ENCODE measurements at regions of chr10 and their contacts with region 1.

Region 1: GRCh38 chr10:27661514-27662286 is 83.9 kb downstream of the MKX start:
- DNase-seq: no peak
- ATAC-seq: no peak

Region 2: DNA sequence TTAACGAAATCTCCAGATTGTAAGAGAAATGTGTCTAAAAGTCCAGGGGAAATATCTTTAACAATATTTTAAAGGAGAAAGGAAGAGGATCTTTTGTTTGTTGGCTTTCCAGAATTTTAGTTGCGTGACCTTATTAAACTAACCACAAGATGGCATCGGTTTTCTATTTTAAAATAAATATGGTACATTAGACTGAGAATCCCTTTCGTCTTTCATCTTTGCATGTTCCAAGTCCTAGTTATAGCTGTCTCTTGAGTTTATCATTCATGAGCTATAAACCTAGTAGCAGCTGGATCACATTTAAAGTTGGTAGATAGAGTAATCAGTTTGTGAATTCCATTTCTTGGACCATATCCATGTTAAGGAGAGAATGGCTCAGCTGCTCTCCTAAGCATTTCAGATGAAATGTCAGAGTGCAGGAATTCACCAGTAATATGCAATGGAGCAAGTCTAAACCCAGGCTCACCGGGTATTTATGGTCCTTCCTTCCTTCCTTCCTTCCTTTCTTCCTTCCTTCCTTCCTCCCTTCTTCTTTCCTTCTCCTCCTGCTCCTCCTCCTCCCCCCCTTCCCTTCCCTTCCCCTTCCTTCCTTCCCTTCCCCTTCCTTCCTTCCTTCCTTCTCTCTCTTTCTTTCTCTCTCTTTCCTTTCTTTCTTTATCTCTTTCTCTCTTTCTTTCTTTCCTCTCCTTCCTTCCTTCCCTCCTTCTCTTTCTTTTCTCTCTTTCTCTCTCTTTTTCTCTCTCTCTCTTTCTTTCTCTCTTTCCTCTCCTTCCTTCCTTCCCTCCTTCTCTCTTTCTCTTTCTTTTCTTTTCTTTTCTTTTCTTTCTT is 215.4 kb before region 1 on chr10:
- intact Hi-C with region 1: loop called (anchors 2 kb)
- DNase-seq: no peak
- ATAC-seq: no peak

Region 3: DNA sequence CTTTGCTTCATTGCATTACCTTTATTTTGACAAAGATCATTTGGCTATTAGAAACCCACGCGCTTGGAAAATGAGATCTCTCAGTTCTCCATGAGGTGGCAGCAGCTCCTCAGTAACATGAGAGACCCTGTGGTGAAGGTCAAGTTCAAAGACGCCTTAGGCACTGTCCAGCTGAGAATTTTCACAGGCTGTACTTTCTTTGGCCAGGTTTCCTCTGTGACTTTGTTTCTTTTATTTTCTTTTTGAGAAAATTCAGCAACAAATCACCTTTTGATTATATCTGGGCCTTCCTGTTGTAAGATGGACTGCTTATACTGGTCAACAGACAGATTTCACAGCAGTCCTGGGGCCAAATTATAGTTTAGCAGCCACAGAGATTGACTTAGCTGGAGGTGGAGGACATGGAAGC is 103.1 kb before region 1 on chr10:
- intact Hi-C with region 1: loop called (anchors 2 kb)
- DNase-seq: no peak
- ATAC-seq: peak; percentile 81

Region 4: DNA sequence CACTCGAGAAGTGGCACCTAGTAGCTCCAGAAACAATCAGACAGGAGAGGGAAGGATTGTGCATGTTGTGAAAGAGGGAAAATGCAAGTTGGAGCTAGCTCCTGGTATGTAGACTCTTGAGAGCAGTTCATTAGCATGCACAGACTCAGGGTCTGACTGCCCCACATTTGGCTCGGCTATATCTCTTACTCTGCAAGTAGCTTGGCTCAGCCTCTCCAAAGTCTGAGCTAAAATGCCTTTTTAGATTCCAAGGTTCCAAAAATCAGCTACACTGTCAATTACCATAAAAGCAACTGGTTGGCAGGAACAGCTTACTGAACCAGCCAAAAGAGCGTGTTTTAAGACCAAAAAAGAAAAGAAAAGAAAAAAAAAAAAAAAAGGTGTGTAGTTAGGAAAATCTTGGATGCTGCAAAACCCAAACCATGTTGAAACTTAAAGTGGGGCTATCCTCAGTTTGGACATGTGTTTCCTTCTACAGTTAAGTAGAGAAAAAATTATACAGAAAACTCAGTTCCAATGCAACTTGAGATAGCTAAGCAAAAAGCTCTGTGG is 18.4 kb after region 1 on chr10:
- intact Hi-C with region 1: no loop called
- DNase-seq: no peak
- ATAC-seq: peak; percentile 62

Region 5: GRCh38 chr10:27783660-27784059 is 122.0 kb after region 1 on chr10:
- intact Hi-C with region 1: no loop called
- DNase-seq: no peak
- ATAC-seq: no peak

Measured in Right ventricle myocardium inferior (tissue), 1 donor.